ENCODE measurements at regions of chr1 and their contacts with region 1.

Region 1: DNA sequence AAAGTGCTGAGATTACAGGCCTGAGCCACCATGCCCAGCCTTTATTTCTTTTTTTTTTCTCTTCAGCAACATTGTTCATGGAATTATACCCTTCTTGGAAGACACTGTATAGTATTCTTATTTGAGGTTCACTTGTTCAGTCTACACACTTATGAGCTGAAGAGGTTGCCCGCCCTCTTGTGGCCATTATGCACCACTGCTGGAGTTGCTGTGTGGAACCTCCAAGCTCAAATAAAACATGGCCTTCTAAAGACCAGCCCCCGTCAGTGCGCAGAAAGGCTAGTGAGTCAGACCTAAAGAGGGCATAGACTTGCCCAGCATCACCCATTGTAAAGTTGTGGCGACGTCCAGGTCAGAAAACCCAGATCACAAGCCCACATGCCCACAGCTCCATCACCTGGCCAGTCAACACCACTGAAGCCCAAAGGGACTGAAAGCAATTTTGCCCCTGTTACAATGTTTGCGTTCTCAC is 20.4 kb downstream of the LURAP1 start:
- DNase-seq: peak; percentile 77
- H3K4me3 ChIP-seq: no peak overlapping the region
- H3K27ac ChIP-seq: no peak overlapping the region
- H3K27me3 ChIP-seq: no peaks in the 10 kb centered on the region
- CTCF ChIP-seq: peak; percentile 98

Region 2: GRCh38 chr1:46043458-46044017 is 180.0 kb before region 1 on chr1:
- CTCF ChIA-PET with region 1: interaction called, 50 read pairs
- POLR2A ChIA-PET with region 1: no interaction called
- DNase-seq: no peak
- H3K4me3 ChIP-seq: no peak overlapping the region
- H3K27ac ChIP-seq: no peak overlapping the region
- H3K27me3 ChIP-seq: no peaks in the 10 kb centered on the region
- CTCF ChIP-seq: no peak

Region 3: GRCh38 chr1:46203738-46204405 is 19.6 kb before region 1 on chr1:
- CTCF ChIA-PET with region 1: interaction called, 16 read pairs
- POLR2A ChIA-PET with region 1: interaction called, 4 read pairs
- DNase-seq: no peak
- H3K4me3 ChIP-seq: peak overlapping the region; percentile 88
- H3K27ac ChIP-seq: no peak overlapping the region
- H3K27me3 ChIP-seq: no peaks in the 10 kb centered on the region
- CTCF ChIP-seq: no peak

Region 4: DNA sequence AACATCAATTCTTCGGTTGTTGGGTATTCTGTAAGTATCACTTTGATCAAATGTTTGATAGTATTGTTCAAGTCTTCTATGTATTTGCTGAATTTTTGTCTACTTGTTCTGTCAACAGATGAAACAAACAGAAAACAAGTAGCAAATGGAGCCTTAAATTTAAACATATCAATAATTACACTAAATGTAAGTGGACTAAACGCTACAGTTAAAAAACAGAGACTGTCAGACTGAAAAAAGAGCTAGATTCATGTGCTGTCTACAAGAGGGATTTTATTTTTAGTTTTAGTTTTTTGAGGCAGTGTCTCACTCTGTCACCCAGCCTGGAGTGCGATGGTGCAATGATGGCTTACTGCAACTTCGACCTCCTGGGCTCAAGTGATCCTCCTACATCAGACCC is 13.4 kb after region 1 on chr1:
- CTCF ChIA-PET with region 1: interaction called, 41 read pairs
- POLR2A ChIA-PET with region 1: interaction called, 3 read pairs
- DNase-seq: no peak
- H3K4me3 ChIP-seq: no peak overlapping the region
- H3K27ac ChIP-seq: no peak overlapping the region
- H3K27me3 ChIP-seq: no peaks in the 10 kb centered on the region
- CTCF ChIP-seq: no peak

Measured in AG04450 (cell line).